Activated CD4-positive, alpha-beta memory T cell treated with anti-CD3 and anti-CD28 coated beads for 36 hours (primary cell): ENCODE measurements at regions of chr17 and their contacts with region 1.

Region 1: GRCh38 chr17:75940724-75941441 is at the start of gene FBF1:
- DNase-seq: peak; percentile 93
- H3K4me3 Mint-ChIP-seq: peak within 1 kb of the TSS; percentile 94
- H3K27ac Mint-ChIP-seq: peak within 1 kb of the TSS; percentile 75
- H3K4me1 Mint-ChIP-seq: peaks cover 14% of the 10 kb centered on the region
- H3K27me3 Mint-ChIP-seq: no peaks in the 10 kb centered on the region
- total RNA-seq, gene FBF1: 17.2 to 18.1 TPM

Region 2: DNA sequence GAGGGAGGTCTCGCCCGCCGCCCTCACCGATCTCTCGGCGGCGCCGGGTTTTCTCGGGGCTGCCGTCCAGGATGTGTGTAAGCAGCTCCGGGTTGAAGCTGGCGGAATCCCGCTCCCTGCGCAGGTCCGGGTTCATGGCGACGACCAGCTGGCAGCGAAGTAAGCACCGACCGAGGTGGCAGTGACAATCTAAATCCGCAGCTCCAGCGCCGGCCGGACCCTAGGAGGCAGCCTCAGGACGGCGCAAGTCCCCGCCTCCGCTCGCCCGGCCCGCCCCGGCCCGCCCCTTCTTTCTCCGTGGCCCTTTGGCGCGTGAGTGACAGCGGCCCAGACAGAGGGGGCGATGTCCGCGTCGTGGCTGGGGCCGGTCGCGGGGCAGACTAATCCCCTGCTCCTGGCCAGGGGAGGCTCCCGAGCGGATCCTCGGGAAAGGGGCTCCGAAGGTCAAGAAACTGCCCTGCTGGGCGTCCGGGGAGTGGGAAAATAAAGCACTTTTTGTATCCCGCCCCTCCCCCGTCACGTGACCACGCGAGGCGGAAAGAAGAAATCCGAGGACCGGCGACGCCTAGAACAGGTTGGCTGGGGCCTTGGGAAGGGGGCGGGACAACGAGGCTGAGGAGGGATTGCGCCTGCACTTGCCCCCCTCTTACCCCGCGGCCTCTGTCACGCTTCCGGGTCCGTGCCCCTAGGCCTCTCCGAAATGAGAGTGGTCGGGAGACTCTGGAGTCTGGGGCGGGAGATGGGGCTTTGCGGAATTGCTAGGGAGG is 38.2 kb after region 1 on chr17 and contains the starts of genes ACOX1 and TEN1:
- CTCF ChIA-PET with region 1: no interaction called
- POLR2A ChIA-PET with region 1: interaction called, 4 read pairs
- intact Hi-C with region 1: loop called (anchors 1 kb)
- DNase-seq: peak; percentile 97
- H3K4me3 Mint-ChIP-seq: peak within 1 kb of the TSS; percentile 96
- H3K27ac Mint-ChIP-seq: peak within 1 kb of the TSS; percentile 99
- H3K4me1 Mint-ChIP-seq: peaks cover 33% of the 10 kb centered on the region
- H3K27me3 Mint-ChIP-seq: no peaks in the 10 kb centered on the region
- total RNA-seq, gene ACOX1: 34.0 to 35.1 TPM
- total RNA-seq, gene TEN1: 11.4 to 12.3 TPM